Mammary epithelial cell (primary cell): ENCODE measurements at regions of chr1 and their contacts with region 1.

Region 1: DNA sequence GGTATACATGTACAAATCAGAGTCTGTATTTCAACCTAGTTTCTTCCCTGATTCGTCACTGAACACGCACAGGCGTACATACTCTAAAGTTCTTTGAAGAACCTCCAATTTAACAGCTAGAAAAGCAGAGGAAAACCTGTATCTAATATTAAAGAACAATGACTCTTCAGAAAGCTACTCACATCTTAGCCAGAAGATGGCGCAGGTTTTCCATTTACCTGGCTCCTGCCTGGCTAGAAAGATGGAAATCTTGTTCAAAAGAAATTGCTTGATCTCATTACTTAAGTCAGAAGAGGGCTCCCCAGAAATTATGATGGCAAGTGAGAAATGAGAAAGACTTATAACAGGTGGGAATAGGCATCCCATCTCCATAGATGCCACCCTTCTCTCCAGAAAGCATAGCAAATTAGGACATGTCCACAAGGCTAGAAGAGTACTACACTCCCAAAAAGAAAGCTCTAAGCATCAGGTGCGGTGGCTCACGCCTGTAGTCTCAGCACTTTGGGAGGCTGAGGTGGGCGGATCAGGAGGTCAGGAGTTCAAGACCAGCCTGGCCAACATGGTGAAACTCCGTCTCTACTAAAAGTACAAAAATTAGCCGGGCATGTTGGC is 19.0 kb upstream of the L1TD1 start:
- DNase-seq: peak; percentile 39
- H3K4me3 ChIP-seq: no peak overlapping the region
- H3K27ac ChIP-seq: no peak overlapping the region
- H3K4me1 ChIP-seq: peaks cover 8% of the 10 kb centered on the region
- H3K27me3 ChIP-seq: peaks cover 1% of the 10 kb centered on the region
- CTCF ChIP-seq: peak; percentile 77 to 79

Region 2: DNA sequence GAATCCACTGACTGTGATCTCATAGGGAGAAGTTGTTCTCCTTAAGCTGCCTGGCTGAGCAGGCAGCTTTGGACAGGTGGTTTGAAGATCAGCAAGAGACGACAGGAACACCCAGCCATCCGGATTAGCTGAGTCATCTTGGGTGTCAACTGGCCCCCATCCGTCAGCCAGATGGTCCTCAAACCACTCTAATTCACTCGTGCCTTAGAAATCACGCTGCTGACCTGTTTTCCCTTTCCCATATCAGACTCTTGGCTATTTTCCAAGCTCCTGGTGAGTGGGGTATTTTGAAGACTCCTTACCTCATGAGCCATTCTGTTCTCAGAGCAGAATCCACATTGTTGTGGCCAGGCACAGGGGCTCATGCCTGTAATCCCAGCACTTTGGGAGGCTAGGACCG is 130.1 kb before region 1 on chr1:
- CTCF ChIA-PET with region 1: no interaction called
- dilution Hi-C with region 1: no loop called
- in situ Hi-C with region 1: no loop called
- intact Hi-C with region 1: no loop called
- DNase-seq: peak; percentile 20
- H3K4me3 ChIP-seq: no peak overlapping the region
- H3K27ac ChIP-seq: no peak overlapping the region
- H3K4me1 ChIP-seq: no peaks in the 10 kb centered on the region
- H3K27me3 ChIP-seq: no peaks in the 10 kb centered on the region
- CTCF ChIP-seq: no peak

Region 3: GRCh38 chr1:62247391-62248168 is 71.9 kb after region 1 on chr1:
- CTCF ChIA-PET with region 1: no interaction called
- dilution Hi-C with region 1: no loop called
- in situ Hi-C with region 1: no loop called
- intact Hi-C with region 1: loop called (anchors 5 kb)
- DNase-seq: no peak
- H3K4me3 ChIP-seq: no peak overlapping the region
- H3K27ac ChIP-seq: no peak overlapping the region
- H3K4me1 ChIP-seq: peaks cover 5% of the 10 kb centered on the region
- H3K27me3 ChIP-seq: no peaks in the 10 kb centered on the region
- CTCF ChIP-seq: no peak

Region 4: DNA sequence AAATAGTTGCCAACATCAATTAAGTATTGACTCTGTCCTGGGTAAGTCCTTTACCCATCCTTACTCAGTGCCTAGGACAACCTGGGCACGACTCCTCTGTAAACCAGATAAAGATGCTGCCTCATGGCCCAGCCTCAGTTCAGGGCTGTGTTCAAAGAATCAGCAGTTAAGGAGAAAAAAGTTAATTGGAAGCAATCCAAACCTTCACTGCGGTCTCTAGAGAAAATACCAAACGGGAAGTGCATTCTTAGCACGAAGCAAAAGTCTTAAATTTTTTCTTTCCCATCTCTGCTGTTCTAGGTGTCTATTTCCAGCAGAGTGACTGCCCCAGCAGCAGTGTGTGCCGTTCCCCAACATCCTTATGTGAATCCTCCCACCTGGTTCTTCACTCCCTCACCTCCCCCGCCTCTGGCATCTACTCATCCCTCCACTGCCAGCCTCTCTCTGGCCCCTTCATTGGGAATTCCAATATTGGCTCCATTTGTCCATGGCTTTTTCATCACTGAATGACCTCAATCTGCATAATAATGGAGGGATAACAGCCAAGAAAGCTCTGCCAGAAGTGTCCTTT is 120.3 kb after region 1 on chr1:
- CTCF ChIA-PET with region 1: no interaction called
- dilution Hi-C with region 1: no loop called
- in situ Hi-C with region 1: no loop called
- intact Hi-C with region 1: loop called (anchors 1 kb)
- DNase-seq: peak; percentile 62
- H3K4me3 ChIP-seq: peak overlapping the region in 1 of 3 experiments; percentile 12
- H3K27ac ChIP-seq: no peak overlapping the region
- H3K4me1 ChIP-seq: peaks cover 27% of the 10 kb centered on the region
- H3K27me3 ChIP-seq: no peaks in the 10 kb centered on the region
- CTCF ChIP-seq: no peak

Region 5: GRCh38 chr1:62436466-62437256 is 261.0 kb after region 1 on chr1 and contains the start of gene USP1:
- CTCF ChIA-PET with region 1: no interaction called
- dilution Hi-C with region 1: no loop called
- in situ Hi-C with region 1: no loop called
- intact Hi-C with region 1: loop called (anchors 1 kb)
- DNase-seq: peak; percentile 100
- H3K4me3 ChIP-seq: peak within 1 kb of the TSS; percentile 64 to 88 (median 76)
- H3K27ac ChIP-seq: peak within 1 kb of the TSS; percentile 98
- H3K4me1 ChIP-seq: peaks cover 8% of the 10 kb centered on the region
- H3K27me3 ChIP-seq: no peaks in the 10 kb centered on the region
- CTCF ChIP-seq: no peak
- total RNA-seq, gene USP1: 15.3 to 36.4 TPM